ENCODE measurements at regions of chr7 and their contacts with region 1.

Region 1: DNA sequence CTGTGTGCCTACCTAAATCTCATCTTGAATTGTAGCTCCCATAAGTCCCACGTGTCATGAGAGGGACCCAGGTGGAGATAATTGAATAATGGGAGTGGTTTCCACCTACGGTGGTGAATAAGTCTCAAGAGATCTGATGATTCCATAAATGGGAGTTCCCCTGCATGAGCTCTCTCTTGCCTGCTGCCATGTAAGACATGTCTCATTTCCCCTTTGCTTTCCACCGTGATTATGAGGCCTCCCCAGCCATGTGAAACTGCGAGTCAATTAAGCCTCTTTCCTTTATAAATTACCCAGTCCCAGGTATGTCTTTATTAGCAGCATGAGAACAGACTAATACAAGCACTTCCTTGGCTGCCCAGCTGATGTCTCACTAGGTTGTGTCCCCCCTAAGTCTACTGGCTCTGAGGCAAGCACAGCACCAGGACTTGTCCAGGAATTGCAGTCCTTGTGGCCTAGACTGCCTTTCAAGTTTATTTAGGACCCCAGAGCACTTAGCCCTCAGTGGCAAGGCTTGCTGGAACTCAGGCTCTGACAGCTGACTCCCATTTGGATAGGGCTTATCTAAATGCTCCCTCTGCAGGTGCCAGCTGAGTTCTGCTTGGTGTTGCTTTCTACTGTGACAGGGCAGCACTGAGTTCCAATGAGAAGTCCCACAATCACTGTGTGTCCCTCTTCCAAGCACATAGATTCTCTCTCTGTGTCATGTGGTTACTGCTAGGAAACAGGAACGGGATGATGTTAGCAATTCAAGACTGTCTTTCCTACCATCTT is 59.0 kb upstream of the TAS2R16 start:
- DNase-seq: no peak
- ATAC-seq: no peak

Region 2: DNA sequence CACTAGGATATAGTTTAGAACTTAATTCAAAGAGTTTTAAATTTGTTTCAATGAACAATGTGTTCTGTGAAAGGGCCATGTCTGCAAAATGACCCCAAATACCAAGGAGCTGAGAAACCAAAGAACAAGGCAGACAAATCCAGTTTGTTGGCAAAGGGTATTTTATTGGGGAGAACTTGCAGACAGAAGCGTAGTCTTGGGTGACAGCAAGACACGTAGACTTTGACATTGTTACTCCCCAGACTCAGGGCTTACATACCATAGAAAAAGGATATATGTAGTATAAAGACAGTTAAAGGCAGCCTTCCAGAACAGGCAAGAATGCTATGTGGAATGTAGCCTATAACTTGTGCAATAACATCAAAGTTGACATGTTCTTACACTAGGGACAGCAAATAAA is 35.9 kb after region 1 on chr7:
- intact Hi-C with region 1: loop called (anchors 5 kb)
- DNase-seq: no peak
- ATAC-seq: no peak

Region 3: GRCh38 chr7:123961731-123962130 is 907.2 kb after region 1 on chr7:
- intact Hi-C with region 1: no loop called
- DNase-seq: no peak
- ATAC-seq: no peak

Measured in sciatic nerve (tissue), 2 donors.